ENCODE measurements at regions of chr1 and their contacts with region 1.

Region 1: DNA sequence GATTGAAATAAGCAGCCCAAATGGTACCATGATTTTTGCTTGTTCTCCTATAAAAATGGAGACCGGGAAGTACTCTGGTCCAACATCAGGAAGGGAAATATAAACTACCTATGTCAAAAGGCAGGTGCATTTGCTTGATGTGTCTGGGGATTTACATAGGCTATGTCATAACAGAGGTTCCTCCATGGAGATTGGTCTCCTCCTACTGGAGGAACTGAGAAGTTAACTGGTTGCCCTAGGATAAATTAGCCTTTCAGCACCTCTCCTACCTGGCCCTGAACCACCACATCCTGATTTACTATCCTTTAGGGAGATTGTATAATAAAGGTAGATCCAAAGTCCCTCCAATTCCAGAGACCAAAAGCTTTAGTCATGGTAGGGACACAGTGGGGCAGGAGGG is 1109.3 kb upstream of the B3GALT2 start:
- DNase-seq: peak; percentile 47
- H3K4me3 Mint-ChIP-seq: no peak overlapping the region
- H3K27ac Mint-ChIP-seq: no peak overlapping the region
- H3K4me1 Mint-ChIP-seq: peaks cover 47% of the 10 kb centered on the region
- H3K27me3 Mint-ChIP-seq: no peaks in the 10 kb centered on the region

Region 2: GRCh38 chr1:192983349-192983980 is 1312.2 kb before region 1 on chr1:
- CTCF ChIA-PET with region 1: no interaction called
- intact Hi-C with region 1: loop called (anchors 2 kb)
- DNase-seq: peak; percentile 58
- H3K4me3 Mint-ChIP-seq: no peak overlapping the region
- H3K27ac Mint-ChIP-seq: peak overlapping the region; percentile 67
- H3K4me1 Mint-ChIP-seq: peaks cover 25% of the 10 kb centered on the region
- H3K27me3 Mint-ChIP-seq: no peaks in the 10 kb centered on the region

Region 3: DNA sequence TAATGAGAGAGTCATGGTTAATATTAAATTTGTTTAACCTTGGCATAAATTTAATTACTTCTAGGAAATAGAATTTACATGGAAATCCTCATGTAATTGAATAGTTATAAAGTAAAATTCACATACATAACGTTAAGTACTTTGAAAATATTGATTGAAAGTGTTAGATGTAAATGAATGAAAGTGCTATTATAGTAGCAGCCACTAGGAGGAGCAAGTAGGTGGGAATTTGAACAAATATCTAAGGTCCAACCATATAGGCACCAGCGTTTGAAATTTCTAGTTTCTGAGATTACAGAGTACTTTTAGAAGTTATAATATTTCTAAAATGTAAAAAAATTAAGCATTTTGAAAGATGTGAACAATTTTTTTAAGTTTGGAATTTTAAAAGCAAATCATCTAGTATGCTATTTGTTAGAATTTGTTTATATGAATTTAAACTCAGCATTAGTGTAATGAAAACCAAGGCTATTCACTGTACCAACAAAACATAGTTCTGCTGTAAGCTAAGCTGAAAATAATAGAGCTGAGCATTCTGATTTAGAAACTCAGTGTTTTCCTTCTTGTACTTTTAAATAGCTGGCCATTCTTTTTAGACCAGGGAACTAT is 1112.6 kb before region 1 on chr1:
- CTCF ChIA-PET with region 1: no interaction called
- intact Hi-C with region 1: loop called (anchors 1 kb)
- DNase-seq: no peak
- H3K4me3 Mint-ChIP-seq: no peak overlapping the region
- H3K27ac Mint-ChIP-seq: no peak overlapping the region
- H3K4me1 Mint-ChIP-seq: peaks cover 35% of the 10 kb centered on the region
- H3K27me3 Mint-ChIP-seq: no peaks in the 10 kb centered on the region

Region 4: DNA sequence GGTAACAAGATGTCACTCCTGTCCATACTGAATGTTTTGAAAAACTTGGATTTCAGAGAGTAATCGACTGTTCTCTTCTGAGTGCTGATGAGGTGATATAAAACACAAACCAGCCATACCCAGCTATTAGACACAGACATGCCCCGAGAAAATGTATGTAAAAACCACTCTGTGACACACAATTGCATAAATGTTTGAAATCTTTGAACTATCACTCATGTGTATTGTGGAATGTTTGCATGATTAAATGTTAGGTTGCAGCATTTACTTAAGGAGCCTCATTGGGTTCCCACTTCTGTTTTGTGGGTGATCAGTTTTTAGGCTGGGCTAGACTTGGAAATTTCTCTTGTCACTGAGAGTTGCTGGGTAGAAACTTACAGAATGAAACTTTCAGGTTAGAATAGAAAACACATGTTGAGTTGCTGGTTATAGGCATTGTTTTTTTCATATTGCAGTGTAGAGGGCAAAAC is 838.8 kb before region 1 on chr1:
- CTCF ChIA-PET with region 1: no interaction called
- intact Hi-C with region 1: loop called (anchors 5 kb)
- DNase-seq: no peak
- H3K4me3 Mint-ChIP-seq: no peak overlapping the region
- H3K27ac Mint-ChIP-seq: no peak overlapping the region
- H3K4me1 Mint-ChIP-seq: peaks cover 23% of the 10 kb centered on the region
- H3K27me3 Mint-ChIP-seq: no peaks in the 10 kb centered on the region

Region 5: GRCh38 chr1:193799948-193800690 is 495.6 kb before region 1 on chr1:
- CTCF ChIA-PET with region 1: no interaction called
- intact Hi-C with region 1: loop called (anchors 5 kb)
- DNase-seq: peak; percentile 8
- H3K4me3 Mint-ChIP-seq: no peak overlapping the region
- H3K27ac Mint-ChIP-seq: no peak overlapping the region
- H3K4me1 Mint-ChIP-seq: peaks cover 16% of the 10 kb centered on the region
- H3K27me3 Mint-ChIP-seq: no peaks in the 10 kb centered on the region

Region 6: DNA sequence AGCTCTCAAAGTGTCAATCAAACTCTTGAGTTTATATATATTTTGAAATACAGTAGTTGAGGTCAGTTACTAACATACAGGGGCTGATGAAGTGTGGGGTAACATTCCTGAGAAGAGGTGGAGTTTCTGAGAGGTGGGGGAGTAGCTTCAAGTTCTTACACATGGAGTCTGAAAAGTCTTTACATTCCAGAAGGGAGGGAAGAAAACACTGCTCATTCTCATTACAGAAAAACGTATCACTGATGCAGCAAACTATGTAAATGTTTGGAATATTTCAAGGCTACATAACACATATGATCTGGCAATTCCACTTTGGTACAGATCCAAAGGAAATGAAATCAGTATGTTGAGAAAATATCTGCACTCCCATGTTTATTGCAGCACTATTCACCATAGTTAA is 43.5 kb before region 1 on chr1:
- CTCF ChIA-PET with region 1: no interaction called
- intact Hi-C with region 1: no loop called
- DNase-seq: no peak
- H3K4me3 Mint-ChIP-seq: no peak overlapping the region
- H3K27ac Mint-ChIP-seq: no peak overlapping the region
- H3K4me1 Mint-ChIP-seq: no peaks in the 10 kb centered on the region
- H3K27me3 Mint-ChIP-seq: no peaks in the 10 kb centered on the region

Region 7: GRCh38 chr1:194279975-194280374 is 15.7 kb before region 1 on chr1:
- CTCF ChIA-PET with region 1: no interaction called
- intact Hi-C with region 1: no loop called
- DNase-seq: no peak
- H3K4me3 Mint-ChIP-seq: no peak overlapping the region
- H3K27ac Mint-ChIP-seq: no peak overlapping the region
- H3K4me1 Mint-ChIP-seq: peaks cover 10% of the 10 kb centered on the region
- H3K27me3 Mint-ChIP-seq: no peaks in the 10 kb centered on the region

Region 8: GRCh38 chr1:194338241-194338948 is 42.7 kb after region 1 on chr1:
- CTCF ChIA-PET with region 1: no interaction called
- intact Hi-C with region 1: loop called (anchors 2 kb)
- DNase-seq: peak; percentile 20
- H3K4me3 Mint-ChIP-seq: no peak overlapping the region
- H3K27ac Mint-ChIP-seq: no peak overlapping the region
- H3K4me1 Mint-ChIP-seq: peaks cover 11% of the 10 kb centered on the region
- H3K27me3 Mint-ChIP-seq: no peaks in the 10 kb centered on the region

Measured in activated naive CD4-positive, alpha-beta T cell treated with anti-CD3 and anti-CD28 coated beads for 36 hours (primary cell).